Right cardiac atrium (tissue), 5 donors: ENCODE measurements at regions of chr1 and their contacts with region 1.

Region 1: DNA sequence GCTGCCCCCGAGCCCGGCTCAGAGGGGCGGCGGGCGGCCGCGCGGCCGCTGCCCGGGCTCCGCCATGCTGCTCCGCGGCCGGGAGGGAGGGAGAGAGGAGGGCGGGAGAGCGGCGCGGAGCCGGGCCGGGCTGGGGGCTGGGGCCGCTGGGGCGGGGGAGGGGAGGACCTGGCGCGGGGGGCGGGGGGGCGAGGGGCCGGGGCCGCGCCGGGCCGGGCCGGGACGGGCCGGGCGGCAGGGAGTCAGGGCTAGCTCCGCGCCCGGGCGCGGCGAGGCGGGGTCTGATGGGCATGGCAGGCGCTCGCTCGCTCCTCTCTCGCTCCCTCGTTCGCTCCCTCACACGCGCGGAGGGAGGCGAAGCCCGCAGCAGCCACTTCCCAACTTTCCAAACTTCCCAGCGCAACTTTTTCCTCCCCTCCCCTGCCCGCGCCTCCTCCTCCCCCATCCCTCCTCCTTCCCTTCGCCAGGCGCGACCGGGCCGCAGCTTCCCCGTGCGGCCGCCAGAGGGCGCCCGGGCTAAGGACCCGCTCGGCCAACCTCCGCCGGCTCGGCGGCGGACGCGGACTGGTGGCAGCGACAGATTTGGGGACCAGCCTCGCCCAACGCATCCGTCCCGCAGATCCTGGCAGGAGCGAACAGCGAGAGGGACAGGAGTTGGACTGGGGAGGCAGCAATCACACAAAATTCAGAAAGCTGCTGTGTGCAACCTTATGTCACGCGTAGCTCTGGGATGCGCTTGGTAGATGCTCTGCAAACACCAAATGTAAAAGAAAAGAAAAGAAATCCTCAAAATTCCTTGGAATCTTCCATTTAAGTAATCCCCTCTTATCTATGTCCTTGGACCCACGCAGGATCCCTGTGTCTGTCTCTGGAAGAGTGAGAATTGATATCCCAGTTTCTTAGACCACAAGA is at the start of gene TRABD2B:
- DNase-seq: peak; percentile 86 to 95 (median 94)
- ATAC-seq: peak; percentile 76 to 86
- H3K4me3 ChIP-seq: peak within 1 kb of the TSS; percentile 89
- H3K27ac ChIP-seq: peak within 1 kb of the TSS; percentile 85
- H3K4me1 ChIP-seq: no peaks in the 10 kb centered on the region
- H3K27me3 ChIP-seq: no peaks in the 10 kb centered on the region
- total RNA-seq, gene TRABD2B: 13.4 to 23.7 (median 18.1) TPM

Region 2: DNA sequence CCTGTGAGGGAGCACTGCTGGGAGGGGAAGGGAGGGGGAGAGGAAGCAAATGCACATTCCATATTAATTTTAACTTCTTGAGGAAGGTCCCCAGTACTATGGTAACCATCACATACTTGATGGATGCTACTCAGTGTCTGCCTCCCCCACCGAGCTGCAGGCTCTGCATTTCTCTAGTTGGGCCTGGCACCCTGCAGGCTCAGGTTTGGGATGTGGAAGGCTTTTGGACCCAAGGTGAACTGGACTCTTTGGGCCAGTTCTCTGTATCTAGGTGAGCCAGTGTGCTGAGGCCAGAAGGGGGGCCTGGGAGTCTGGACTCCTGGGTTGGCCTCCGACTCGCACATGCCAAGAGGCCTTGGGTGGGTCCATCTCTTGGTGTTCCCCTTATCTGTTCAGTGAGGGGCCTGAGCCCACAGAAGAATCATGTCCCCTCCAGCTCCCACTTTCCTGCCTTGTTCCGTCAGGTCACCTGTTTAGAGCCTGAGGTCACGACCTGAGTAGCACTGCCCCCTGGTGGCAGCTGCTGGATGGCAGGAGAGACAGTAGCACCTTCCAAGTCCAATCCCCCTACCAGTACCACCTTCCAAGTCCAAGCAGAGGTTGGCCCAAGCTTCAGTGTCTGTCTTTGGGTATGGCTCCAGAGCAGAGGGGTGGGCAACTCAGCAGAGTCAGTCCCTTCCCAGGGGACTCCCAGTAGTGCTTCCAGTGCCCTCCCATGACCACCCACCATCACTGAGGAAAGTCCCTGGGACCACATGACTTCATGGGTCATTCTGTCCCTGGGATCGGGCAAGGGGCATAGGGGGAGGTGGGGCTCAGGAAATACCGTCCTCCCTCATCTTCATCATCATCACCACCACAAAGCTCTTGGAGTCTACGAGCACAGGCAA is 242.2 kb before region 1 on chr1:
- intact Hi-C with region 1: loop called in 2 of 4 experiments (anchors 10 kb)
- DNase-seq: peak in 2 of 3 donors; percentile 46 to 68
- ATAC-seq: no peak
- H3K4me3 ChIP-seq: no peak overlapping the region
- H3K27ac ChIP-seq: no peak overlapping the region
- H3K4me1 ChIP-seq: peaks cover 8% of the 10 kb centered on the region
- H3K27me3 ChIP-seq: no peaks in the 10 kb centered on the region

Region 3: GRCh38 chr1:47785561-47786271 is 211.8 kb before region 1 on chr1:
- intact Hi-C with region 1: loop called in 1 of 4 experiments (anchors 10 kb)
- DNase-seq: peak; percentile 53 to 78 (median 77)
- ATAC-seq: peak; percentile 83 to 86
- H3K4me3 ChIP-seq: no peak overlapping the region
- H3K27ac ChIP-seq: peak overlapping the region; percentile 15
- H3K4me1 ChIP-seq: peaks cover 19% of the 10 kb centered on the region
- H3K27me3 ChIP-seq: no peaks in the 10 kb centered on the region

Region 4: DNA sequence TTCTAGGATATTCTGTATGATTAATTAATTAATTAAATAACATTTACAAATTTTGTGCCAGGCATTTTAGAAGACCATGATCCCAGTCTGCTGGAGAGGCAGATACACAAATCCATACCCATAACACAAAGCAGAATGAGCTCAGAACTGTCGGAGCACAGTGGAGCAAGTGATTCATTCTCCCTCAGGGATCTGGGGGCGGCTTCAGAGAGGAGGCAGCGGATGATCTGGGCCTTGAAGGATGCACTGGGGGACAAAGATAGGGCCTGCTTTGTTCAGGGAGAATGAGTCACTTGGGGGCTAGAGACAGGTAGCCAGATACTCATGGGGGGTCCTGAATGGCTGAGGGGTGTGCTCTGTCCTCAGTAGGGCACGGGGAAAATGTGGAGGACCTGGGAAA is 50.5 kb after region 1 on chr1:
- intact Hi-C with region 1: loop called in 1 of 4 experiments (anchors 5 kb)
- DNase-seq: peak in 1 of 3 donors; percentile 47
- ATAC-seq: peak in 1 of 2 donors; percentile 58
- H3K4me3 ChIP-seq: no peak overlapping the region
- H3K27ac ChIP-seq: no peak overlapping the region
- H3K4me1 ChIP-seq: peaks cover 13% of the 10 kb centered on the region
- H3K27me3 ChIP-seq: no peaks in the 10 kb centered on the region

Region 5: GRCh38 chr1:48061162-48062136 is 63.9 kb after region 1 on chr1:
- intact Hi-C with region 1: loop called in 2 of 4 experiments (anchors 5 kb)
- DNase-seq: peak in 2 of 3 donors; percentile 43 to 53
- ATAC-seq: peak; percentile 64 to 72
- H3K4me3 ChIP-seq: no peak overlapping the region
- H3K27ac ChIP-seq: no peak overlapping the region
- H3K4me1 ChIP-seq: no peaks in the 10 kb centered on the region
- H3K27me3 ChIP-seq: no peaks in the 10 kb centered on the region